Gastrocnemius medialis (tissue), 4 donors: ENCODE measurements at regions of chr2 and their contacts with region 1.

Region 1: DNA sequence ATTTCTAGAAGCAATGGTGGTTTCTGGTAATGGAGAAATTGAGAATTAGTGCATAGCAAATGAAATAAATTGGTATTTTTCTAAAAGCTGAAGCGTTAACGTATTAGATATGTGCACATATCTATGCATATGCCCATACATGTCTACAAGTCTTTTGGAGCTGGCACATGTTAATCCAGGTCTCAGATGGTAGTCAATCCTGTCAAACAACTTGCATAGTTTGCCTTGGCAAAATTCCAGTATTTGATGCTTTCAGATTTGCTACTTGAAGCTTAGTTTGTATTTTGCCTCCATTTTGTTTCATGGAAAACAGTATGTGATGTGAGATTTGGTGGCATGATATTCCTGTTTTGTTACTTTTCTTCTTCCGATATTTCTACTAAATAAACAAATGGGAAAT is 304.6 kb downstream of the PARD3B start:
- DNase-seq: no peak
- ATAC-seq: no peak
- H3K4me3 ChIP-seq: no peak overlapping the region
- H3K27ac ChIP-seq: no peak overlapping the region
- H3K4me1 ChIP-seq: peaks cover 7 to 11% of the 10 kb centered on the region in 2 donors
- H3K27me3 ChIP-seq: no peaks in the 10 kb centered on the region
- CTCF ChIP-seq: no peak
- POLR2A ChIP-seq: no peak

Region 2: DNA sequence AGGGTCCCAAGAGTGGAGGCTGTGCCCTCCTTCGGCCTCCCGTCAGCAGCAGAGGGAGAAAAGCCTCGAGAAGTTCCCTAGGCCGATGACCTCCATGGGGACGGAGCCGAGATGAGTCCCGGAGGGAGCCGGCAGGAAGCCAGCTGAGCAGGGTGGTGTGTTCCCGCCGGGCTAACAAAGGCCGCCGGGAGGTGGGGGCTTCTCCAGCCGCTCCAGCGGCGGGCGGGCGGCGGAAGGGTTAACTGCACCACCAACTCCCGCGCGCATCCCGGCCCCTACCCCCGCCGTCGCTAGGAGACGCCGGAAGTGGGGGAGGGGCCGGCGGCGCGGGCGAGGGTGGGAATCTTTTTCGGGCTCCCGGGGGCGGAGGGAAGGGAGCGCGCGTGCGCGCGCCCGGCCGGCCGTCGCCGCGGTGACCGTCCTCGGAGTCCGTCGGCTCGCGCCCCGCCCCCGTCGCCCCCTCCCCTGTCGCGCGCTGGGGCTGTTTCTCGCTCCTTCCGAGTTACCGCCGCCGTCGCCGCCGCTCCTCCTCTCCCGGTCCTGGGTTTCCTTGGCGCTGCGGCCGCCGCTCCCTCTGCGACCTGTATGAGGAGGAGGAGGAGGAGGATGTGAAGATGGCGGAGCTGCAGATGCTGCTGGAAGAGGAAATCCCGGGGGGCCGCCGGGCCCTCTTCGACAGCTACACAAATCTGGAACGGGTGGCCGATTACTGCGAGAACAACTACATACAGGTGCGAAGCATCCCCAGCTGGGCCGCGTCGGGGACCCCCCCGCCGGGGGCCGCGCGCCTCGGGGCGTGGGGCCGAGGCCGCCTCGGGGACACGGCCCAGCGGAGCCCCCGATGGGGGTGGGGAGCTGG is 1521.8 kb before region 1 on chr2 and contains the start of gene ABI2:
- in situ Hi-C with region 1: no loop called
- intact Hi-C with region 1: loop called (anchors 10 kb)
- DNase-seq: peak; percentile 39 to 60
- ATAC-seq: peak; percentile 84 to 87
- H3K4me3 ChIP-seq: peak within 1 kb of the TSS; percentile 82 to 95 (median 91)
- H3K27ac ChIP-seq: peak within 1 kb of the TSS; percentile 64 to 80 (median 76)
- H3K4me1 ChIP-seq: peaks cover 6 to 11% of the 10 kb centered on the region in 2 donors
- H3K27me3 ChIP-seq: no peaks in the 10 kb centered on the region
- CTCF ChIP-seq: no peak
- POLR2A ChIP-seq: peak; percentile 30 to 50
- total RNA-seq, gene ABI2: 6.2 to 17.0 (median 12.9) TPM